ENCODE measurements at regions of chr9 and their contacts with region 1.

Region 1: GRCh38 chr9:77433675-77434445 is 214.3 kb downstream of the GNA14 start:
- DNase-seq: peak; percentile 73
- ATAC-seq: peak; percentile 92
- H3K4me3 Mint-ChIP-seq: no peak overlapping the region
- H3K27ac Mint-ChIP-seq: no peak overlapping the region
- H3K4me1 Mint-ChIP-seq: peaks cover 4% of the 10 kb centered on the region
- H3K27me3 Mint-ChIP-seq: peaks cover 1% of the 10 kb centered on the region
- CTCF ChIP-seq: peak; percentile 89

Region 2: GRCh38 chr9:77449255-77450039 is 15.6 kb after region 1 on chr9:
- CTCF ChIA-PET with region 1: interaction called, 20 read pairs
- POLR2A ChIA-PET with region 1: no interaction called
- intact Hi-C with region 1: no loop called
- DNase-seq: no peak
- ATAC-seq: no peak
- H3K4me3 Mint-ChIP-seq: no peak overlapping the region
- H3K27ac Mint-ChIP-seq: no peak overlapping the region
- H3K4me1 Mint-ChIP-seq: peaks cover 6% of the 10 kb centered on the region
- H3K27me3 Mint-ChIP-seq: no peaks in the 10 kb centered on the region
- CTCF ChIP-seq: no peak

Region 3: DNA sequence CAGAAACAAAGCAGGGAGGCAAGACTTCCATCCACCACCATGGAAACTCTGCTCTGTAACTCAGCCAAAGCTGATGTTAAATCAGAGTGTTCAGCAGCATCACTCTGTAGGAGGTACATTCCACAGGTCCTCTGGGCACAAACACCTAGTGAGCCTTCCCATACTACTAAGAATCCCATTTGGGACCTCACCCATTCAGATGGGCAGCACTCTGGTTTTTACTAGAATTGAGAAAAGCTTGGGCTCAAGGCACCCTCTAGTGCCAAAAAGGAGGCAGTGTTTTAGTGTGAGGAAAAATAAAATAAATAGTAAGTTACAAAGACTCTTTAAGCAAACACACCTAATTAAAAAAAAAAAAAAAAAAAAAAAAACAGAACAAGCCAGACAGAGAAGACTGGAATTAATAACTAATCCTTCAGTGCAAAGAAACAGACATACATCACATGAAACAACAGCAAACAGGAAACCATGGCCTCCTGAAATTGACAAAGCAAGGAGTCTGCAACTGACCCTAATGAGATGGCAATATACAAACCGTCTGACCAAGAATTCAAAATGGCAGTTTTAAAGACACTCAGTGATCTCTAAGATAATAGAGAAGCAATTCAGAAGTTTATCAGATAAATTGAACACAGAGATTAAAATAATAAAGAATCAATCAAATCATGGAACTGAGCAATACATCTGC is 54.7 kb after region 1 on chr9:
- CTCF ChIA-PET with region 1: interaction called, 16 read pairs
- POLR2A ChIA-PET with region 1: no interaction called
- intact Hi-C with region 1: no loop called
- DNase-seq: peak; percentile 3
- ATAC-seq: peak; percentile 62
- H3K4me3 Mint-ChIP-seq: peak overlapping the region; percentile 81
- H3K27ac Mint-ChIP-seq: peak overlapping the region; percentile 57
- H3K4me1 Mint-ChIP-seq: peaks cover 13% of the 10 kb centered on the region
- H3K27me3 Mint-ChIP-seq: peaks cover 7% of the 10 kb centered on the region
- CTCF ChIP-seq: peak; percentile 60

Region 4: GRCh38 chr9:77744841-77745430 is 311.1 kb after region 1 on chr9:
- CTCF ChIA-PET with region 1: interaction called, 21 read pairs
- POLR2A ChIA-PET with region 1: no interaction called
- intact Hi-C with region 1: no loop called
- DNase-seq: no peak
- ATAC-seq: no peak
- H3K4me3 Mint-ChIP-seq: no peak overlapping the region
- H3K27ac Mint-ChIP-seq: peak overlapping the region; percentile 69
- H3K4me1 Mint-ChIP-seq: peaks cover 48% of the 10 kb centered on the region
- H3K27me3 Mint-ChIP-seq: no peaks in the 10 kb centered on the region
- CTCF ChIP-seq: no peak

Region 5: GRCh38 chr9:77751341-77752091 is 317.7 kb after region 1 on chr9:
- CTCF ChIA-PET with region 1: interaction called, 21 read pairs
- POLR2A ChIA-PET with region 1: no interaction called
- intact Hi-C with region 1: no loop called
- DNase-seq: peak; percentile 37
- ATAC-seq: peak; percentile 57
- H3K4me3 Mint-ChIP-seq: no peak overlapping the region
- H3K27ac Mint-ChIP-seq: no peak overlapping the region
- H3K4me1 Mint-ChIP-seq: peaks cover 39% of the 10 kb centered on the region
- H3K27me3 Mint-ChIP-seq: no peaks in the 10 kb centered on the region
- CTCF ChIP-seq: peak; percentile 59